Aorta (tissue), 5 donors: ENCODE measurements at regions of chr1 and their contacts with region 1.

Region 1: GRCh38 chr1:228125185-228125584 is 14.9 kb upstream of the GUK1 start:
- DNase-seq: no peak
- ATAC-seq: no peak
- H3K4me3 ChIP-seq: no peak overlapping the region
- H3K27ac ChIP-seq: no peak overlapping the region
- H3K4me1 ChIP-seq: peaks cover 0 to under 1% of the 10 kb centered on the region in 2 donors
- H3K27me3 ChIP-seq: no peaks in the 10 kb centered on the region

Region 2: GRCh38 chr1:228174482-228175375 is 49.5 kb after region 1 on chr1:
- intact Hi-C with region 1: loop called in 1 of 2 experiments (anchors 5 kb)
- DNase-seq: no peak
- ATAC-seq: no peak
- H3K4me3 ChIP-seq: no peak overlapping the region
- H3K27ac ChIP-seq: no peak overlapping the region
- H3K4me1 ChIP-seq: no peaks in the 10 kb centered on the region
- H3K27me3 ChIP-seq: no peaks in the 10 kb centered on the region

Region 3: DNA sequence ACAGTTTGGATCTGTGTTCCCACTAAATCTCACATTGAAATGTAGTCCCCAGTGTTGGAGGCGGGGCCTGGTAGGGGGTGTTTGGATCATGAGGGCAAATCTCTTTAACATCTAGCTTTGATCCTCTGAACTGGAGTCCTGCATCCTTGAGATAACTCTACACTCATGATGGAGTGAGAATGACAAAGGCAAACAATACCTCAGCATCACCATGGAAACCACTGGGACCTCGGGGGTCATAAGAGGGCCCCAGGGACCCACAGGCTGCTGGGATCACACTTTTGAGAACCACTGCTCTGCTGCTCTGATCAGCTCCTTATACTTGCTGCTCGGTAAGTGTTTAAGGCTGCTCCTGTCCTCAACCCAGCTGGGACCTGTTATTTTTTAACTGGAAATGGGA is 69.3 kb after region 1 on chr1:
- intact Hi-C with region 1: no loop called
- DNase-seq: peak in 1 of 2 donors; percentile 34
- ATAC-seq: no peak
- H3K4me3 ChIP-seq: no peak overlapping the region
- H3K27ac ChIP-seq: no peak overlapping the region
- H3K4me1 ChIP-seq: no peaks in the 10 kb centered on the region
- H3K27me3 ChIP-seq: no peaks in the 10 kb centered on the region

Region 4: DNA sequence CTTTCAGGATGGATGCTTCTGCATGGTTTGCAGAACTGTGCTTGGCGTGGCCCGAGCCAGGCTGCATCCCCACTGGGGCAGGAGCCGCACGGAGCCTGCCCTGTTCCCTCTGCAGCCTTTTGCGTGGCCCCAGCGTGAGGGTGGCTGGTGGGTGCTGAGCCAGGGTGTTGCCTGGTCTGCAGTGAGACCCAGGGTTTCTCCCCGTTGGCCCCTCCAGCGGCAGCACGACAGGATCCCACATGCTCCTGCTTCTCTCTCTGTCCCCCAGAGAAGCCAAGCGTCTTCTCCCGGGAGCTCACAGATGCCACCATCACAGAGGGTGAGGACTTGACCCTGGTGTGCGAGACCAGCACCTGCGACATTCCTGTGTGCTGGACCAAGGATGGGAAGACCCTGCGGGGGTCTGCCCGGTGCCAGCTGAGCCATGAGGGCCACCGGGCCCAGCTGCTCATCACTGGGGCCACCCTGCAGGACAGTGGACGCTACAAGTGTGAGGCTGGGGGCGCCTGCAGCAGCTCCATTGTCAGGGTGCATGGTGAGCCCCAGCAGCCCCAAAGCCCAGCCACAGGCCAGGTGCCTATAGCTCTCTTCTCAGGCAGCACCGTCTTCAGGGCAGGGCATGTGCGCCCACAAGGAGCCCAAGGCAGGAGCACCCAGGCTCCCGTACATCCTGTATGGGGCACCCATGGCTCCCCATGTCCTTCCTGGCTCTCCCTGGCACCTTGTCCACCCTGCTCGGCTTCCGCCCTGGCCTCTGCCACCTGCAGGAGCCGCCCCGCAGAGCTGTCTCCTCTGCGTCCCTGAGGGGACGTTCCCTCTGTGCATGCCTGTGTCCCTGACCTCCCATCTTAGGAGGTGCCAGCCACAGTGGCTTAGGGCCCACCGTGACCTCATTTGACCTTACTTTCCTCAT is 161.6 kb after region 1 on chr1:
- intact Hi-C with region 1: no loop called
- DNase-seq: peak; percentile 38 to 71
- ATAC-seq: no peak
- H3K4me3 ChIP-seq: no peak overlapping the region
- H3K27ac ChIP-seq: no peak overlapping the region
- H3K4me1 ChIP-seq: no peaks in the 10 kb centered on the region
- H3K27me3 ChIP-seq: no peaks in the 10 kb centered on the region

Region 5: GRCh38 chr1:228515200-228515834 is 390.1 kb after region 1 on chr1:
- intact Hi-C with region 1: loop called in 1 of 2 experiments (anchors 5 kb)
- DNase-seq: no peak
- ATAC-seq: no peak
- H3K4me3 ChIP-seq: no peak overlapping the region
- H3K27ac ChIP-seq: no peak overlapping the region
- H3K4me1 ChIP-seq: no peaks in the 10 kb centered on the region
- H3K27me3 ChIP-seq: no peaks in the 10 kb centered on the region